ENCODE measurements at regions of chr2 and their contacts with region 1.

Region 1: GRCh38 chr2:241734467-241735208 is at the start of gene D2HGDH:
- DNase-seq: peak; percentile 98
- ATAC-seq: peak; percentile 95
- total RNA-seq, gene D2HGDH: 19.6 TPM

Region 2: DNA sequence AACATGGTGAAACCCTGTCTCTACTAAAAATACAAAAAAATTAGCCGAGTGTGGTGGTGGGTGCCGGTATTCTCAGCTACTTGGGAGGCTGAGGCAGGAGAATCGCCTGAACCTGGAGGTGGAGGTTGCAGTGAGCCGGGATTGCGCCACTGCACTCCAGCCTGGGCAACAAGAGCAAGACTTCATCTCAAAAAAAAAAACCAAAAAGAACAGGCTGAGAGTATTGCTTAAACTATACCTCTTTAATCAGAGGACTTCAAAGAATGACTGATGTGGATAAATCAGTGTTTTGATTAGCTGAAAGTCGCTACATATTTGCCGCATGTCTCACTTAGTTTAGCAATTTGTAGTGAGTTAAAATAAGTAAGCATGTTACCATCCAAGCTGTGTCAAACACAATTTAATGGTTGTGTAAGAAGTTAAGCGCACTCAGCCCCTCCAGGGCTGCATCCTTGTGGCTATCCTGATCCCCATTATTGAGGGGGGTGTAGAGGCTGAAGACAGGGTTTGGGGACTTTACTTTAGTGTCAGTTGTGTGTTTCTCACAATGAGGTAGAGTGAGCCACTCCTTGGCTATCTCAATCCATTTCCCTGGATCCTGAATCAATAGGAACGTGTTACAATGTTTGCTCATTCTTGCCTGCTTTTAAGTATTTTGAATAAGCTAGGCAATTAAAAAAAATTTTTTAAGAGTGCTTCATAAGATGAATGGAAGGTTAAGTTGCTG is 389.6 kb before region 1 on chr2:
- intact Hi-C with region 1: no loop called
- DNase-seq: no peak
- ATAC-seq: no peak

Region 3: DNA sequence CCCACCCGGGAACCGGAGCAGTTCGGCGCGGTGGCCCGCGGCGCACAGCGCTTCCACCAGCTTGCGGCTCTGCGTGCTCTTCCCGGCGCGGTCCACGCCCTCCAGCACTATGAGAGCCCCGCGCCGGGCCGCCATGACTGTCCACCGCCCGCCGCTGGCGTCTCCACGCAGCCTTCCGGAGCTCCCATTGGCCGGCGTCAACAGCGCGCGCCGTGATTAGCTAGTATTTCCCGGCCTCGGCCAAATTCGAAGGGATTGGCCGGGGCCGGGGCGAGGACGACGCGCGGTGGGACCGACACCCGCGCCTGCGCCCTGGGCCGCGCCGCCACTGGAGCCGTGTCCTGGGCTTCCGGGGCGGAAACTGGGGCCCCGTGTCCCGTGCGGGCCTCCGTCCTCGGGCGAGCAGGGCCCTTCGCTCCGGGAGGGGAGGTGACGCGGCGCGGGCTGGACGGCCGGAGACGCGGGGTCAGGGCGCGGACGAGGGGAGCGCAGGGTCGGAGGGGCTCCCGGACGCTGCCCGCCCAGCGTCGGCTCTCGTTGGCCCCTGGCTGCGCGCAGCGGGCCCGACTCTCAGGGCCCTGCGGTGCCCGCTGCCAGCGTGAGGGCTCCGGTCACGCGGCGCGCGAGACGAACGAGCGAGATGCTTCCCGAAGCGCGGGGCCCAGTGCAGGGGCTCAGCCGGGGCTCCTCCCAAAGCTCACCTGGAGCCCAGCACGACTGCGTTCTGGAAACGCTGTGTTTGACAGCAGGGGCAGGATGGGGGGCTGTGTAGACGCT is 47.8 kb before region 1 on chr2 and contains the start of gene DTYMK:
- intact Hi-C with region 1: loop called (anchors 5 kb)
- DNase-seq: peak; percentile 99
- ATAC-seq: peak; percentile 99
- total RNA-seq, gene DTYMK: 11.1 TPM

Region 4: GRCh38 chr2:241706537-241706936 is 28.1 kb before region 1 on chr2:
- intact Hi-C with region 1: no loop called
- DNase-seq: no peak
- ATAC-seq: no peak

Region 5: GRCh38 chr2:241810307-241811210 is 75.9 kb after region 1 on chr2:
- intact Hi-C with region 1: loop called (anchors 1 kb)
- DNase-seq: peak; percentile 82
- ATAC-seq: peak; percentile 88

Region 6: DNA sequence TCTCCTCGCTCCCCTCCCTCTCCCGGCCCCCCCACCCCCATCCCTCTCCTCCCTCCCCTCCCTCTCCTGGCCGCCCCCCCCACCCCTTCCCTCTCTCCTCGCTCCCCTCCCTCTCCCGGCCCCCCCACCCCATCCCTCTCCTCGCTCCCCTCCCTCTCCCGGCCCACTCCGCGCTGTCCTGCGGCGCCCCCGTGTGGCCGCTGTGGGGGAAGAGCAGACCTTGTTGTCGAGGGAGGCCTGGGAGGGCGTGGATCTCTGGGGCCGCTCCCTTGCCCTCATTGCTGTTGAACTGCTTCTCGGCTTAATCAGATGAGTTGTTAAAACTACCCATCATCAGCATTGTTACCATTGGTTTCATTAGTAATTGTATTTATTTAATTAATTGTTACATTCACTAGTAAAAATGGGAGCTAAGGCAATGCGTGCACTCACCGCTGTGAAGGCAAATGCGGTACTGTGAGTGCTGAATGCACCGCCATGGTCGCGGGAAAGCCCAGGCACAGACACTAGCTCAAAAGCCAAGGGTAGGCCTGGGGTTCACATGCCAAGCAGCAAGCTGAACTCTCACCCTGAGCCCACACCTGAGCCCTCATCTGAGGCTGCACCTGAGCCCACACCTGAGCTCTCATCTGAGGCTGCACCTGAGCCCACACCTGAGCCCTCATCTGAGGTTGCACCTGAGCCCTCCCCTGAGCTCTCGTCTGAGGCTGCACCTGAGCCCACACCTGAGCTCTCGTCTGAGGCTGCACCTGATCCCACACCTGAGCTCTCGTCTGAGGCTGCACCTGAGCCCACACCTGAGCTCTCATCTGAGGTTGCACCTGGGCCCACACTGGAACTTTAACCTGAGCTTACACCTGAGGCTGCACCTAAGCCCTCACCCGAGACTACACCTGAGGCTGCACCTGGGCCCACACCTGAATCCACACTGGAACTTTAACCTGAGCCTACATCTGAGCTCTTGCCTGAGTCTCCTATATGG is 143.6 kb after region 1 on chr2:
- intact Hi-C with region 1: loop called (anchors 5 kb)
- DNase-seq: peak; percentile 88
- ATAC-seq: peak; percentile 29

Region 7: DNA sequence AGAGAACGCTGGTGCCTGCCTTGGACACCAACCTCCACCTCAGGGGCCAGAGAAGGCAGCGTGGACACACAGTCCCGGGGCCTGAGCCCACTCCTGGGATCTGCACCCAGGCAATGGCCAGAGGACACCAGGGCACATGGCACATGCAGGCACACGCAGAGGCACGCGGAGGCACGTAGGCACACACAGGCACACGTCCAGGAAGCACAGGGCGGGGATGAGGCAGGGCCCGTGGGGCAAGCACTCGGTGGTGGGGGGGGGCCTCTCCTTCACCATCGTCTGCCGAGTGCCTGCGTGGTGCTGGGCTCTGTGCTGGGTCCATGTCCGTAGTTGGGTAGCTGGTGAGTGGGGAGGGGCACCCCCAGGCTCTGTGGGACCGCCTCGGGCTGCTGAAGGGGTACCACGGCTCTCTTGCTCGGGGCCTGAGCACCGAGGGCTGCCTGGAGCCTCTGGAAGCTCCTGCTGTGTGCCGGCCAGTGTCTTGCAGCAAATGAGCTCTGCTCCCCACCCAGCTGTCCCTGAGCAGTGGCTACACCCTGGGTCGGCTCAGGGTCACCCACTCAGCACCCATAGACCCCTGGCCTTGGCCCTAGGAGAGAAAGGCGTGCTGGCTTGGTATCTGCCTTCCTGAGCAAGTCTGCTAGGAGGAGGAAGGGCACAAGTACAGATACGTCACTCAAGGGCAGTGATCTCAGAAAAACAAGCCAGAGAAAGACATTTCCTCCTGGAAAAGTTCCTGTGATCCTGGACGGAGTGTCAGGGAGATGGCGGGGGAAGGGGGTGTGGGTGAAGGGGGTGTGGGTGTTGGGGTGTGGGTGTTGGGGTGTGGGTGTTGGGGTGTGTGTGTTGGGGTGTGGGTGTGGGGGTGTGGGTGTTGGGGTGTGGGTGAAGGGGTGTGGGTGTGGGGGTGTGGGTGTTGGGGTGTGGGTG is 161.3 kb after region 1 on chr2:
- intact Hi-C with region 1: no loop called
- DNase-seq: peak; percentile 66
- ATAC-seq: peak; percentile 18